ENCODE measurements at regions of chr2 and their contacts with region 1.

Region 1: DNA sequence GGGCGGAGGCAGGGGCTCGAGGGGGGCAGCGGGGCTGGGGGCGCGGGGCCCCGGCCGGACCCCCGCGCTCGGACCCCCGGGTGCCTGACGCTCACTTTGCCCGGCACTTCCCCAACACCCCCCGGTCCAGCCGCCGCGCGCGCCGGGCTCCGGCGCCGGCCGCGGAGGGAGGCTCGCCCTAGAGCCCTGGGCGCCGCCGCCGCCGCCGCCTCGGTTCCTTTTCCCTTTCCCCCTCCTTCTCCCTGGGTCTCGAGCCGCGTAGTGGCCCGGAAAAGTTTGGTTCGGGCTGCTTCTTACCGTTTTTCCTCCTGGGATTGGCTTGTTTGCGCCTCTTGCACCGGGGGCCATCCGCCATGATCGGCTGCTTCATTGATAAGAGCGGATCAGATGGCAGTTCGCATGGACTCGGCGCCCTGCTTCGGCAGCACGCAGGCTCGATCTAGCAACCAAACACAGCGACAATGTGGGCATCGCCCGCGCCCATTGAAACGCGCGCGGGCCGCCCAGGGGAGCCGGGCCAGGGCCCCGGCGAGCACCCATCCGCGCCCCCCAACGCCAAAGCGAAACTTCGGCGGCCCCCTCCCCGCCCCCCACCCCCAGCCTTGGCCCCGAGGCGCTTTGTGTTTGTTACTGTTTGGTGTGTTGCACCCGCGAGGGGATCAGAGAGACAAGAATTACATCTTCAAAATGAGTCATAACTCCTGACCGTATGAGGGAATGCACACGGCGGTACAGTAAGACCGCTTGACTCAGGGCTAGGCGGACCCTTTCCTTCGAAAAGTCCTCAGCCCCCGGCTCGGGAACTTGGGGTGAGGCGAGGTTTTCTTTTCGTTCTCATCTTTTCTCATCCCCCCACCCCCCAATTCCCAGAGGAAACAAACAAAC is 2.7 kb downstream of the ZEB2 start:
- DNase-seq: peak in 31 of 42 donors; percentile 21 to 80 (median 53)

Region 2: GRCh38 chr2:144332356-144333142 is 184.7 kb before region 1 on chr2:
- intact Hi-C with region 1: loop called (anchors 5 kb)
- DNase-seq: peak; percentile 49 to 95 (median 89)

Region 3: GRCh38 chr2:144426981-144427479 is 90.2 kb before region 1 on chr2:
- intact Hi-C with region 1: loop called (anchors 5 kb)
- DNase-seq: no peak

Region 4: GRCh38 chr2:144703852-144704708 is 186.9 kb after region 1 on chr2:
- intact Hi-C with region 1: loop called (anchors 5 kb)
- DNase-seq: peak in 12 of 42 donors; percentile 5 to 50 (median 16)

Region 5: DNA sequence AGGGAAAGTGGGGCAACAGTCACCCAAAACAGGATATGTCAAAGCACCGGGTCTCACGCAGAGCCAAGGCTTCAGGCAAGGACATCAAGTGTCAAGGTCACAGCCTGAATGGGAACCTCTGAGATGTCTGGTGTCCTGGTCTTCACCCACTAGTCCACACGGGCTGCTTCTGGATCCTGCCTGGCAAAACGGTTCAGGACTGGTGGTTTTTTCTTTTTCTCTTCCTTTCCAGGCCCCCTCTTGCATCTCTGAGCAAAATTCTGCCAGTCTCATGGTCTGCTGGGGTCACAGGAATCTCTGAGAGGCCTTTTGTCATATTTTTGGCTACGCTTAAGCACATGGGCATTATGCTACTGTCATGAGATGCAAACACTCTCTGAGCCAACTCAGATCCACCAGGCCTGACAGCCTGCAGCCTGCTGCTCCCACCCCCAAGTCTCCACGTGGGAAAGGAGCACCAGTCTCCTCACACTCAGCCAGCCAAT is 520.9 kb after region 1 on chr2:
- intact Hi-C with region 1: loop called (anchors 5 kb)
- DNase-seq: peak; percentile 32 to 92 (median 70)

Measured in head of caudate nucleus (tissue), 42 donors.